ENCODE measurements at regions of chr1 and their contacts with region 1.

Region 1: GRCh38 chr1:206106328-206107167 is 10.6 kb downstream of the AVPR1B start:
- DNase-seq: peak; percentile 80
- H3K4me3 ChIP-seq: no peak overlapping the region
- H3K27ac ChIP-seq: no peak overlapping the region
- H3K4me1 ChIP-seq: no peaks in the 10 kb centered on the region
- H3K27me3 ChIP-seq: no peaks in the 10 kb centered on the region
- CTCF ChIP-seq: peak; percentile 79 to 87 (median 86)
- EP300 ChIP-seq: no peak
- POLR2A ChIP-seq: no peak

Region 2: GRCh38 chr1:205775015-205775716 is 331.4 kb before region 1 on chr1 and contains the start of gene RAB29:
- in situ Hi-C with region 1: loop called (anchors 25 kb)
- intact Hi-C with region 1: no loop called
- DNase-seq: peak; percentile 82
- H3K4me3 ChIP-seq: peak within 1 kb of the TSS; percentile 39 to 82 (median 66)
- H3K27ac ChIP-seq: peak within 1 kb of the TSS; percentile 55 to 78 (median 70)
- H3K4me1 ChIP-seq: peaks cover 0 to 16% (median 4%) of the 10 kb centered on the region in 4 donors
- H3K27me3 ChIP-seq: no peaks in the 10 kb centered on the region
- CTCF ChIP-seq: no peak
- EP300 ChIP-seq: no peak
- POLR2A ChIP-seq: peak; percentile 25
- total RNA-seq, gene RAB29: 1.1 to 13.9 (median 10.2) TPM

Region 3: DNA sequence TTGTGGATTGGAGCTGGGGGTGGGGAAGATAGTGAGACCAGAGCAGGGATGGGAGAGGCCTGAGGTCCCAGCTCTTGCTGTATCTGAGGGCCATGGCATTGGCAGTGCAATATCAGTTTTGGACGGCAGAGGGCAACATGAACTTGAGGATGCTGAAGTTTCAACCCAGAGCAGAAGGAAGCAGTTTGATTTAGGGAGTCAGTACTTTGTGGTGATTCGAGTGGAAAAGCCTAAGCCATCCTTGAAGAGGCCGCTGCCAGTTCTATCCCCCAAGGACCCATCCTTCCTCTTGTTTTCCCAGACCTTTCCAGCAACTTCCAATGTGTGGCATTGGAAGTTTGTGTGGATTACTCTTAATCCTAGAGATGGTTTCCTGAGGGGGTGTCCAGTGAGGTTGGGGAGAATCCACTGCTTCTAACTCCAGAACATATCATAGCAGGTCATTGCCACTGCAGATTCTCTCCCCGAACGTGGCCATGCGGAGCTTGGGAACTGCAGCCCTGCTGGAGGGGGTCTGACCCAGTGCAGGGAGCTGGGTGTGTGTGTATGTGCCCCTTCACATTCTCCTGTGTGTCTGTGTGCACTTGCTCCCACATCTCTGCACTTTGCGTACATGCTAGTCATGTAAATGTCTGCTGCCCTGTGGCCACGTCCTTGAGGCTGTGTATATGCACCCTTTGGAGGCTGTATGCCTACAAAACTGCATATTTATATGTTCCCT is 187.4 kb before region 1 on chr1:
- in situ Hi-C with region 1: no loop called
- intact Hi-C with region 1: loop called (anchors 10 kb)
- DNase-seq: peak; percentile 76
- H3K4me3 ChIP-seq: no peak overlapping the region
- H3K27ac ChIP-seq: no peak overlapping the region
- H3K4me1 ChIP-seq: no peaks in the 10 kb centered on the region
- H3K27me3 ChIP-seq: no peaks in the 10 kb centered on the region
- CTCF ChIP-seq: peak; percentile 82 to 90 (median 86)
- EP300 ChIP-seq: no peak
- POLR2A ChIP-seq: no peak

Region 4: DNA sequence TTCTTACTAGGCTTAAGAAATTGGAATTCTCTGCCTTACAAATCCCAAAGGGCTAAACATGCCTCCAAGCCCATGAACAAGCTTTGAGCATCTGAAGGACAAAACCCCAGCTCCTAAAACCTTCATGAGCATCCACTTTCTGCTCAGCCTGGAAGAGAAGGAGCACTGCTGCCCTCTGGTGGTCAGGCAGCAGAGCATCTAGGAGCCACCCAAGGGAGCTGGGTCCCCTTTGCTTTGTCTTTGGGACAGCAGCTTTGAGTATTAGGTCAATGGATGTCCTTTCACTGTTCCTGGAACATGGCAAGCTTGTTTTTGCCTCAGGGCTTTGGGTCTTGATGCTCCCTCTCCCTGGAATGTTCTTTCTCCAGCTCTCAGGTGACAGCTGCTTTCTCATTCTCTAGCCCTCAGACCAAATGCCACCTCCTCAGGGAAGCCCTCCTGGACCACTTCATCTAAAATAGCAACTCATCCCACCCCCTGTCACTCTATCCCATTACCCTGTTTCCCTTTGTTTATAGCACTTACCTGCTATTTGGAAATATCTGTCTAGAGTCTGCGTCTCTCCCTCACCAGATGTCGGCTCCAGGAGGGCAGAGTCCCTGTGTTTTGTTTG is 129.0 kb before region 1 on chr1:
- in situ Hi-C with region 1: loop called in 2 of 4 experiments (anchors 5 to 25 kb)
- intact Hi-C with region 1: no loop called
- DNase-seq: peak; percentile 68
- H3K4me3 ChIP-seq: no peak overlapping the region
- H3K27ac ChIP-seq: no peak overlapping the region
- H3K4me1 ChIP-seq: no peaks in the 10 kb centered on the region
- H3K27me3 ChIP-seq: no peaks in the 10 kb centered on the region
- CTCF ChIP-seq: peak; percentile 91 to 96 (median 93)
- EP300 ChIP-seq: no peak
- POLR2A ChIP-seq: no peak

Region 5: GRCh38 chr1:205983925-205984725 is 122.4 kb before region 1 on chr1:
- in situ Hi-C with region 1: loop called in 2 of 4 experiments (anchors 5 to 25 kb)
- intact Hi-C with region 1: no loop called
- DNase-seq: peak; percentile 46
- H3K4me3 ChIP-seq: no peak overlapping the region
- H3K27ac ChIP-seq: no peak overlapping the region
- H3K4me1 ChIP-seq: no peaks in the 10 kb centered on the region
- H3K27me3 ChIP-seq: no peaks in the 10 kb centered on the region
- CTCF ChIP-seq: peak; percentile 35 to 62 (median 51)
- EP300 ChIP-seq: no peak
- POLR2A ChIP-seq: no peak

Region 6: DNA sequence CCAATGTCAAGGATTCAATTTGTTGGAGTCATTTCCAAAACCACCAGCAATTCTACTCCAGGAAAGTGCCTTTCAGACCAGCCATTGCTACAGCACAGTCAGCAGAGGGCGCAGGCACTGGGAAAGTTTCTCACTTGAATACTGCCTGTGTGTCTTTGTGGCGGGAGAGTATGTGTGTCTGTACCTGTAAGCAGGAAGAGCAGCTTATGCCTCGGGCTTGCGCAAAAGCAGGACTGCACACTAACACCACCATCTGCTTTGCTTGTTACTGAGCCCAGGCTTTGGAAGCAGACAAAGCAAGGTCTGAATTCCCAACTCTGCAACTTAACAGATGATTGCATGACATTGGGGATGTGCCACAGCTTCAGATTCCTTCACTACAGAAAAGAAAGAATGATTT is 75.8 kb before region 1 on chr1:
- in situ Hi-C with region 1: loop called in 2 of 4 experiments (anchors 5 to 10 kb)
- intact Hi-C with region 1: no loop called
- DNase-seq: peak; percentile 76
- H3K4me3 ChIP-seq: no peak overlapping the region
- H3K27ac ChIP-seq: no peak overlapping the region
- H3K4me1 ChIP-seq: peaks cover 0 to 5% (median 0%) of the 10 kb centered on the region in 4 donors
- H3K27me3 ChIP-seq: no peaks in the 10 kb centered on the region
- CTCF ChIP-seq: peak; percentile 58 to 82 (median 67)
- EP300 ChIP-seq: no peak
- POLR2A ChIP-seq: no peak

Region 7: DNA sequence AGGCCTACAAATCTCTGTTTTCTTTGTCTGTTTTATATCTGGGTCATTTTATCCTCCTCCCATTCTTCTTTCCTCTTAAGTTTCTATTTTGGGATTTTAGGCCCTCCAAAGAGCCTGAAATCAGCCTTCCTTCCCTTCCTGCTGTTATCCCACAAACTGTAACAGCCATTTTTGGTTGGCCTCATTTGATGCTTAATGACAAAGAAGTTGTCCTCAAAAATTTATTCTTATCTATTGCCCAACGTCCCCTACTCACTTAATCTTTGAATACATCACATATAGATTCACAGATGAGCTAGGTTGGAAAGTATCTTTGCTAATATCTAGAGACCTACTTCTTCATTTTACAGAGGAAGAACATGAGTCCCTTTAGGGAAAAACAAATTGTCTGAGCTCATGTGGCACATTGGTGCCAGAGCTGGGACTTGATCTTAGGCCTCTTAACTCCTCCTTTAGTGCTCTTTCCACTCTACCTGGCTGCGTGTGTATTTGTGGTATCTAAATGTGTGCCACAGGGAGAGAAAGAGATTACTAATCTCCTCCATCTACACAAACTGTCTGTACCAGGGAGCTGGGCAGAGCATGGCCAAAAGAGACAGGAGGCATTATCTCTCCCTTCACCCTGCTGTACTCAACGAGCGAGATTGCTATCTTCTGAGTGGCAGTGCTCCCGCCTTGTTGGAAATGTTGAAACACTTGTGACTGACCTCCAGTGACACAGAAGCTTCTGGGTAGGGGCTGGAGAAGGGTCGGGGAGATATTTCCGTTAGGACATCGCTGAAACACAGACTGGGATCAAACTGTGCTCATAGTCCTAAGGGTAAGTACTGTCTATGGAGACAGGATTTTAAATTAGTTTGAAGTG is 23.5 kb before region 1 on chr1:
- in situ Hi-C with region 1: no loop called
- intact Hi-C with region 1: no loop called
- DNase-seq: no peak
- H3K4me3 ChIP-seq: no peak overlapping the region
- H3K27ac ChIP-seq: no peak overlapping the region
- H3K4me1 ChIP-seq: no peaks in the 10 kb centered on the region
- H3K27me3 ChIP-seq: no peaks in the 10 kb centered on the region
- CTCF ChIP-seq: no peak
- EP300 ChIP-seq: no peak
- POLR2A ChIP-seq: no peak